Naive thymus-derived CD4-positive, alpha-beta T cell (primary cell): ENCODE measurements at regions of chr19 and their contacts with region 1.

Region 1: DNA sequence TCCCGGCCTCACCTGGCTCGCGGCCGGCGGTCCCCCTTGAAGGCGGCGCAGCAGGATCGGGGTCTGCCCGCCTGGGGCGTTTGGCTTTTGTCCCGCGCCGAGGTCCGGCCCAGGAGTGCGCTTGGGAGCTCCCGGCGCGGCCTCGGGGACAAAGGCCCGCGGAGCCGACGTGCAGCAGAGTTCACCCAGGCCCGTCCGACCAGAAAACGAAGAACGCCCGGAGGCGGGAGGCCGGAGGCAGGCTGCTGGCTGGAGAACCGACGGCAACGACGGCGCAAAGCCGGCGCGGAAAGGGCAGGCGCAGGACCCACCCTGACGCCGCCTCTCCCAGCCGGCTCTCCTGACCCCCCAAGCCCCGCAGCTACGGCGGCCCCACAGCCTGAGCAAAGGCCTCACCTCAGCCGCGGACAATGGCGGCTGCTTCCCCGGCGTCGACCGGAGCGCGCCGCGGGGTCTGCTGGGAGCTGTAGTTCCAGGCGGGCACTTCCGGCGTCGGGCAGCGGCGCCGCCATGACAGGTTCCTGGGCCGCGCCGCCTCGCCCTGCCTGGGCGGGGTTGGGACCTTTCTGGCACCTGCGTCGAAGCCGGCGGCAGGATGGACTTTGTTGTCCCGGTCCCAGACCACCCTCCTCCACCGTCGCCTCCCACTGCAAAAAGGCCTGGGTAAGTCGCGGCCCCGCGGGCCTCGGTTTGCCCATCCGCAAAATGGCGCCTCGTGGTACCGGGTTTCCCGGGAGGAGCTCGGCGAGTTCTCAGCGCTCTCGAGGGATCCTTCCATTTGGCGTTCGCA is at the start of gene ZNF606:
- DNase-seq: peak; percentile 79 to 87 (median 85)
- ATAC-seq: peak; percentile 100
- H3K4me3 ChIP-seq: peak within 1 kb of the TSS; percentile 91
- H3K4me3 Mint-ChIP-seq: peak within 1 kb of the TSS; percentile 80 to 90 (median 88)
- H3K27ac ChIP-seq: peak within 1 kb of the TSS; percentile 90
- H3K27ac Mint-ChIP-seq: peak within 1 kb of the TSS; percentile 79 to 94 (median 88)
- H3K4me1 ChIP-seq: peaks cover 14 to 18% of the 10 kb centered on the region in 2 donors
- H3K4me1 Mint-ChIP-seq: peaks cover 15 to 40% (median 27%) of the 10 kb centered on the region in 7 donors
- H3K27me3 ChIP-seq: no peaks in the 10 kb centered on the region
- H3K27me3 Mint-ChIP-seq: no peaks in the 10 kb centered on the region
- total RNA-seq, gene ZNF606: 11.9 to 37.5 (median 15.3) TPM

Region 2: DNA sequence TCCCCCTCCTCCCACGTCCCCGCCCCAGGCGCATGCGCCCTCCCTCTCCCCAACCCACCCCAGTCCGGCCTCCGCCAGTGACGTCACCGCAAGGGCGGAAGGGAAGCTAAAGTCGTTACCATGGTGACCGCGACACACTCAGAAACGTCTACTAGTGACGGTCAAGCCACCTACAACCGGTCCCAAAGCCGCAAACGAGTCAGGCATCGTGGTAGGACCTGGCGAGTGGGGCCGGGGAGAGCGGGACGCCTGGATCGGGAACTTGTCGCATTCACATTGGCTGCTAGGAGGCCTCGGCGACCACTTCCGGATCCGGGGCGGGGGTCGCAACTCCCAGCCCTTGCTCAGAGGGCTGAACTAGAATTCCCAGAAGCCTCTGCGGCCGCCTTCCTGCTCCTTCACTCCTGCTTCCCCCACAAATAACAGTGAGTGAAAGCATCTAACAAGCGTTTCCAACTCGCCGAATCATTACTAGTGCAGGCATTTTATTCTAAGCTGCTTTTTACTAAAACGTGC is 1688.0 kb before region 1 on chr19 and contains the start of gene ZSCAN5A:
- CTCF ChIA-PET with region 1: no interaction called
- POLR2A ChIA-PET with region 1: no interaction called
- intact Hi-C with region 1: loop called in 1 of 2 experiments (anchors 2 kb)
- DNase-seq: peak; percentile 93 to 99 (median 99)
- ATAC-seq: peak; percentile 85
- H3K4me3 ChIP-seq: peak within 1 kb of the TSS; percentile 86
- H3K4me3 Mint-ChIP-seq: peak within 1 kb of the TSS; percentile 79 to 100 (median 96)
- H3K27ac ChIP-seq: peak within 1 kb of the TSS; percentile 97
- H3K27ac Mint-ChIP-seq: peak within 1 kb of the TSS; percentile 95 to 100 (median 99)
- H3K4me1 ChIP-seq: peaks cover 4 to 10% of the 10 kb centered on the region in 2 donors
- H3K4me1 Mint-ChIP-seq: peaks cover 13 to 41% (median 26%) of the 10 kb centered on the region in 7 donors
- H3K27me3 ChIP-seq: no peaks in the 10 kb centered on the region
- H3K27me3 Mint-ChIP-seq: no peaks in the 10 kb centered on the region
- total RNA-seq, gene ZSCAN5A: 8.0 to 15.4 (median 11.8) TPM

Region 3: GRCh38 chr19:57410877-57411671 is 591.5 kb before region 1 on chr19 and contains the start of gene ZNF17:
- CTCF ChIA-PET with region 1: no interaction called
- POLR2A ChIA-PET with region 1: no interaction called
- intact Hi-C with region 1: loop called in 1 of 2 experiments (anchors 1 kb)
- DNase-seq: peak; percentile 72 to 95 (median 88)
- ATAC-seq: peak; percentile 100
- H3K4me3 ChIP-seq: peak within 1 kb of the TSS; percentile 80
- H3K4me3 Mint-ChIP-seq: peak within 1 kb of the TSS; percentile 85 to 97 (median 96)
- H3K27ac ChIP-seq: peak within 1 kb of the TSS; percentile 80
- H3K27ac Mint-ChIP-seq: peak within 1 kb of the TSS; percentile 78 to 96 (median 92)
- H3K4me1 ChIP-seq: peaks cover 3 to 8% of the 10 kb centered on the region in 2 donors
- H3K4me1 Mint-ChIP-seq: peaks cover 20 to 46% (median 34%) of the 10 kb centered on the region in 7 donors
- H3K27me3 ChIP-seq: no peaks in the 10 kb centered on the region
- H3K27me3 Mint-ChIP-seq: no peaks in the 10 kb centered on the region
- total RNA-seq, gene ZNF17: 9.3 to 27.8 (median 17.2) TPM

Region 4: DNA sequence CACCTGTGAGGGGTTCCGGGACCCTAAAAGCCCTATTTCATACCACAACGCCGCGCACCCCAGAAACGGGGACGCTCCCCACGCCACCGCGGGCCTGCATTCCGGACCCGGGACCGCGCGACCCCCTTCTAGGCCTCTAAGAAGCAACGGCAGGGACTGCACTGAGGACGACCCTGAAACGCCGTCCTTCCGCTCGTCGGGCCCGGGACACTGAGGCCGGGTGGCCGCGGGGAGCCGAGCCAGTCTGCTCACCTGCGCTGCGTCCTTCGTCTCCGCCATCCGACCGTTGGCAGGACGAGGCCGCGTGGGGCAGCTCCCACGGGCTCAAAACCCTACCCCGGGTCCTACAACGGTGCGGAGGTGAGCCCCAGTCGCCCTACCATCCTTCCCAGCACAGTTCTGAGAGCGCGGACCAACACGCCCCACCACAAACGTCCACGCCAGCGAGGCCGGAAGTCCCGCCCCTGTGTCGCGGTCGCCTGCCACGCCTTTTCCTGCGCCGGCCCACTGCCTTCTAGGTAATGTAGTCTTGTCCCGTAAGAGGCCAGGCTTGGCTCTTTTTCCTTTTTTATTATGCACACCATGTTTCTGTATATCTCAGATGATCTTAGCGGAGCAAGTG is 443.1 kb before region 1 on chr19 and contains the start of gene ZNF550:
- CTCF ChIA-PET with region 1: no interaction called
- POLR2A ChIA-PET with region 1: interaction called, 3 read pairs
- intact Hi-C with region 1: loop called in 1 of 2 experiments (anchors 1 kb)
- DNase-seq: peak; percentile 71 to 85 (median 84)
- ATAC-seq: peak; percentile 99
- H3K4me3 ChIP-seq: peak within 1 kb of the TSS; percentile 89
- H3K4me3 Mint-ChIP-seq: peak within 1 kb of the TSS; percentile 87 to 99 (median 98)
- H3K27ac ChIP-seq: peak within 1 kb of the TSS; percentile 82
- H3K27ac Mint-ChIP-seq: peak within 1 kb of the TSS; percentile 81 to 96 (median 91)
- H3K4me1 ChIP-seq: peaks cover 16 to 19% of the 10 kb centered on the region in 2 donors
- H3K4me1 Mint-ChIP-seq: peaks cover 21 to 45% (median 33%) of the 10 kb centered on the region in 7 donors
- H3K27me3 ChIP-seq: no peaks in the 10 kb centered on the region
- H3K27me3 Mint-ChIP-seq: peaks cover 0 to 16% (median 4%) of the 10 kb centered on the region in 5 donors
- total RNA-seq, gene ZNF550: 12.9 to 56.2 (median 23.5) TPM

Region 5: GRCh38 chr19:57648331-57649003 is 354.1 kb before region 1 on chr19:
- CTCF ChIA-PET with region 1: no interaction called
- POLR2A ChIA-PET with region 1: no interaction called
- intact Hi-C with region 1: no loop called
- DNase-seq: no peak
- ATAC-seq: no peak
- H3K4me3 ChIP-seq: no peak overlapping the region
- H3K4me3 Mint-ChIP-seq: no peak overlapping the region
- H3K27ac ChIP-seq: no peak overlapping the region
- H3K27ac Mint-ChIP-seq: no peak overlapping the region
- H3K4me1 ChIP-seq: no peaks in the 10 kb centered on the region
- H3K4me1 Mint-ChIP-seq: peaks cover 0 to 7% (median 0%) of the 10 kb centered on the region in 7 donors
- H3K27me3 ChIP-seq: no peaks in the 10 kb centered on the region
- H3K27me3 Mint-ChIP-seq: peaks cover 0 to 19% (median 5%) of the 10 kb centered on the region in 5 donors

Region 6: DNA sequence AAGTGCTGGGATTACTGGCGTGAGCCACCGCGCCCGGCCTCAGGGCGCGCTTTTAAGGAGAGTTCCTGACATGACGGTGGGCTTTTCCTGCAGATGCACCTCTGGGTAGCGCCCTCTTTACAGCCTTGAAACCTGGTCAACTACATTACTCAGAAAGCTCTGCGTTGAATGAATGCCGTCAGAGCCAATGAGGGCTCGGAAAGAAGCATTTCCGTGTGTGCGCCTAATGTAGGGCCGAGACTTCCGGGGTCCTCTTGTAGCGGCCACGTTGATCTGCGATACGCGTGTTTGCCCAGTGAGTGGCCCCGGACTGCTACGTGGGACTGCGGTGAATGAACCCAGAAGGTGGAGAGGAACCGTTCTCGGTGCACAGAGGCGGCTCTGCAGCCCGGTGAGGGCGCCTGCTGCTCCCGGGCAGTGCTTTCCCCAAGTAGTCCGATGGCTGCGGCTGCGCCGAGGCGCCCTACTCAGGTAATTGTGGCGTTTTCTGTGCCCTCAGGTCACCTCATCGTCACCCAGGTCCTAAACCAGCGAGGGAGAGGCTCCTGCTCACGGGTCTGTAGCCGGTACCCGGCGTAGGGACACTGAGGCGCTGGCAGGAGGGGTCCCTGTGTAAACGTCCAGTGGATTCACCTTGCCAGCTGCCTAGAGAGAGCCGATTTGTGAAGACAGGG is 183.0 kb before region 1 on chr19:
- CTCF ChIA-PET with region 1: no interaction called
- POLR2A ChIA-PET with region 1: interaction called, 7 read pairs
- intact Hi-C with region 1: loop called in 1 of 2 experiments (anchors 1 kb)
- DNase-seq: peak; percentile 45 to 85 (median 79)
- ATAC-seq: peak; percentile 89
- H3K4me3 ChIP-seq: peak overlapping the region; percentile 98
- H3K4me3 Mint-ChIP-seq: peak overlapping the region; percentile 95 to 99 (median 98)
- H3K27ac ChIP-seq: peak overlapping the region; percentile 92
- H3K27ac Mint-ChIP-seq: peak overlapping the region; percentile 88 to 99 (median 95)
- H3K4me1 ChIP-seq: peaks cover 0 to 13% of the 10 kb centered on the region in 2 donors
- H3K4me1 Mint-ChIP-seq: peaks cover 38 to 73% (median 67%) of the 10 kb centered on the region in 7 donors
- H3K27me3 ChIP-seq: no peaks in the 10 kb centered on the region
- H3K27me3 Mint-ChIP-seq: no peaks in the 10 kb centered on the region

Region 7: DNA sequence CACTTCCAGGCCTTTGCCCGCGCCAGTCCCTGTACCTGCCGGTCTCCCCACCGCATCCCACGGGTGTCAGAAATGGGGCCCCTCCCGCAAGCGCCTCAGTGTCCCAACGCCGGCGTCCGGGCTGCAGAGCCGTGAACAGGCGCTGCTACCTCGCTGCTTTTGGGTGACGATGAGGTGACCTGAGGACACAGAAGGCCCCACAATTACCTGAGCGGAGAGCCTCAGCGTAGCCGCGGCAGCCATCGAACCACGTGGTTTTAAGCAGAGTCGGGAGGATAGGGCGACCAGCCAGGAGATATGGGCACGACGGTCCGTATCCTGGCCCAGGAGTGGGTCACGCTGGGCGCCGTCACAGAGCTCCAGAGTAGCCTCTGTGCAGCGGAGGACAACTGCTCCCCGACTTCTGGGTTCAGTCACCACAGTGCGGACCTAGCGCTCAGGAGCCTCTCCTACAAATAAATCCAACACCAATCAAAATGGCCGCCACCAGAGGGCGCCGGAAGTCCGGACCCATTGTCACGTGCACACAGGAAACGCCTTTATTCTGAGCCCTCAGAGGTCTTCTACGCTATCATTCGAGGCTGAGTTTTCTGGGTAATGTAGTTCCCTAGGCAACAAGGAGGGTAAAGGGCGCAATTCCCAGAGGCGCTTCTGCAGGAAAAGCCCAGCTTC is 113.9 kb before region 1 on chr19 and contains the start of gene ZNF814:
- CTCF ChIA-PET with region 1: no interaction called
- POLR2A ChIA-PET with region 1: interaction called, 5 read pairs
- intact Hi-C with region 1: loop called in 1 of 2 experiments (anchors 1 kb)
- DNase-seq: peak; percentile 61 to 86 (median 81)
- ATAC-seq: peak; percentile 98
- H3K4me3 ChIP-seq: peak within 1 kb of the TSS; percentile 80
- H3K4me3 Mint-ChIP-seq: peak within 1 kb of the TSS; percentile 84 to 95 (median 90)
- H3K27ac ChIP-seq: peak within 1 kb of the TSS; percentile 74
- H3K27ac Mint-ChIP-seq: peak within 1 kb of the TSS; percentile 66 to 92 (median 86)
- H3K4me1 ChIP-seq: no peaks in the 10 kb centered on the region
- H3K4me1 Mint-ChIP-seq: peaks cover 18 to 33% (median 22%) of the 10 kb centered on the region in 7 donors
- H3K27me3 ChIP-seq: no peaks in the 10 kb centered on the region
- H3K27me3 Mint-ChIP-seq: no peaks in the 10 kb centered on the region
- total RNA-seq, gene ZNF814: 12.7 to 56.9 (median 32.7) TPM

Region 8: DNA sequence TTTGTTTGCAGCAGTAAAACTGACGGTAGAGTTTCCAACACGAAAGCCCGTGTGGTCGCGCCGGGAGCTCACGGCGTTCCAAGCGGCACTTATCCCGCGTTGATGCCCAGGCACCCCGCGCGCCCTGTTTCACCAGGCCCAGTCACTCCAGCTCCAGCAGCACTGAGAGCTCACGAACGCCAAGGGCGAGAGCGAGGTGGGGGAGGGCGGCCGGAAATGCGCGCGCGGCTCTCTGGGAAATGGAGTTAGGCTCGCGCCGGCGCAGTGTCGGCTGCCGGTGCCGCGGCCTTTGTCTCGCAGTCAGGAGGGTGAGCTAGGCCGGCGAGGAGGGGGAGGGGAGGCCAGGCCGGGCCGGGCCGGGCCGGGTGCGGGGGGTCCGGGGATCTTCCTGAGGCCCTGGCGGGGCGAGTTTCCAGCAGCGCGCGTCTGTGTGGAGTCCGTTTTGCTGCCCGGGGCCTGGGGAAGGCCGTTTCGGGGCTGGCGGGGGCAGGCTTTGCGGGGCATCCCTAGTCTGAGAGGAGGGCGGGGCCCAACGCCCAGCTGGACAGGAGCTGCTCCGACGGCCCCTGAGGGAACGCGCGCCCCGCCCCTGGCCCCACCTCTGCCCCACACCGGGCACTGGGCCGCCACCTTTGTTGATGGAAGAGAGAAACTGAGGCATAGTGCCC is 56.6 kb after region 1 on chr19 and contains the start of gene ZNF135:
- CTCF ChIA-PET with region 1: no interaction called
- POLR2A ChIA-PET with region 1: interaction called, 4 read pairs
- intact Hi-C with region 1: loop called in 1 of 2 experiments (anchors 1 kb)
- DNase-seq: peak in 8 of 9 donors; percentile 34 to 77 (median 57)
- ATAC-seq: peak; percentile 91
- H3K4me3 ChIP-seq: peak within 1 kb of the TSS; percentile 39
- H3K4me3 Mint-ChIP-seq: peak within 1 kb of the TSS; percentile 33 to 91 (median 84)
- H3K27ac ChIP-seq: peak within 1 kb of the TSS; percentile 73
- H3K27ac Mint-ChIP-seq: peak within 1 kb of the TSS in 6 of 9 donors; percentile 68 to 88 (median 82)
- H3K4me1 ChIP-seq: no peaks in the 10 kb centered on the region
- H3K4me1 Mint-ChIP-seq: peaks cover 0 to 12% (median 6%) of the 10 kb centered on the region in 7 donors
- H3K27me3 ChIP-seq: no peaks in the 10 kb centered on the region
- H3K27me3 Mint-ChIP-seq: peaks cover 2 to 29% (median 19%) of the 10 kb centered on the region in 5 donors
- total RNA-seq, gene ZNF135: 0.07 to 2.9 (median 2.5) TPM